ENCODE measurements at regions of chr9 and their contacts with region 1.

Region 1: DNA sequence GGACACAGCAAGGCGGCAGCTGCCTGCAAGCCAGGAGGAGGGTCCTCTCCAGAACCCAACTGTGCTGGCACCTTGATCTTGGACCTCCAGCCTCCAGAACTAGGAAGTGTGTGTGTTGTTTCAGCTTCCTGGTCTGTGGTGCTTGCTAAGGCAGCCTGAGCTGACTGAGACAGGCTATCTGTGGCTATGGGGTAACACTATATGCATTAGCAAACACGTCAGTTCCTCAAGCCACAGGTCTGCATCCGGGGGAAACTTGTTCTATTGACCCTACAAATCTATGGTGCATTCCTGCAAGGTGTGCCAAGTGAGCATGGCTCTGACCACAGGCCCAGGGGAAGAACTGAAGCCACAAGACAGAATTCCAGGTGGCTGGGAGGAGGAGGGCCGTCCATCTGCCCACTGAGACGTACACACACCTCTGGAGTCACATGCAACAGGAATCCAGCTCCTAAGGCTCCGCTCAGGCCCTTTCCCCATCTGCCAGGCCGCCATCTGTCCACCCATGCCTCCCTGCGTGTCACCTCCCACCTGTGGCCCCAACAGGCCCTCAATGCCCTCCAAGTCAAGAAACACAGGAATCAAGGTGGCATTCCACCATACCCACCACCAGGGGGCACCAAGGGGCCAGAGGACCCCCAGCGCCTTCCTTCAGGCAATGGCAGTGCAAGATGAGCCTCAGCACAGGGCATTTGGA is 174.9 kb downstream of the ROR2 start:
- DNase-seq: no peak
- H3K4me3 ChIP-seq: no peak overlapping the region
- CTCF ChIP-seq: no peak
- POLR2A ChIP-seq: no peak

Region 2: GRCh38 chr9:91433180-91433579 is 342.0 kb before region 1 on chr9:
- intact Hi-C with region 1: no loop called
- DNase-seq: no peak
- H3K4me3 ChIP-seq: no peak overlapping the region
- CTCF ChIP-seq: no peak
- POLR2A ChIP-seq: no peak

Region 3: GRCh38 chr9:91949946-91950664 is 174.9 kb after region 1 on chr9 and contains the start of gene ROR2:
- intact Hi-C with region 1: loop called (anchors 10 kb)
- DNase-seq: peak in 1 of 2 donors; percentile 90
- H3K4me3 ChIP-seq: peak within 1 kb of the TSS; percentile 26
- CTCF ChIP-seq: no peak
- POLR2A ChIP-seq: no peak
- total RNA-seq, gene ROR2: 2.3 to 8.7 (median 5.8) TPM